Activated CD4-positive, alpha-beta T cell treated with anti-CD3 and anti-CD28 coated beads, Interleukin-2, amount 10 ng/mL, durations not matched to agents 24 days and 14 days (primary cell): ENCODE measurements at regions of chr2 and their contacts with region 1.

Region 1: DNA sequence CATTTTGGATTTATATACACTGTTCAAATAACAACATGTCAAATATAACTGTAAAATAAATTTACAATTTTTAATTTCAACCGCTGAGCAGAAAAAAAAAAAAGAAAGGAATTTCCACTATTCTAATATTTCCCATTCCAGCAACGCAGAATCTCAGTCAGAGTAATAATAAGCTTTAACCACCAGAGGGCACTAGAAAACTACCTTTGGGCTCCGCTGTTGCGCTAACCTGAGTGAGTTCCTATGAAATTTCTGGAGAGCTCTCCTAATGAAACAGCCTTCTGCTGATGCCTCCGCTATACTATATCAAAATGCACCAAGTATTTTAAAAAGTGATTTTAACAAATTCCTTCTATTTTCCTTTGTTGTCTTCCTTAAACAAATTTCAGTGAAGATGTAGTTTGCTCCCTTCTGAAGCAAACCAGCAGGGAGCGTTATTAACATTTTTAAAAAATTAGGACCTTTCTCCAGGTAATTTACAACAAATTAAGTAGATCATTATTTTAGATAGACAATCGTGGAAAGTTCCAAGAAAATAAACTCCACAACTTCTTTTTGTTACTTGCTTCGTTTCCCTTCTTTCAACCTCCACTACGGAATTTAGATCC is 23.0 kb downstream of the ERMN start:
- DNase-seq: peak; percentile 82
- H3K4me3 Mint-ChIP-seq: no peak overlapping the region
- H3K27ac Mint-ChIP-seq: no peak overlapping the region
- H3K4me1 Mint-ChIP-seq: peaks cover 13% of the 10 kb centered on the region
- H3K27me3 Mint-ChIP-seq: peaks cover 19% of the 10 kb centered on the region

Region 2: GRCh38 chr2:157194097-157194688 is 108.4 kb before region 1 on chr2:
- intact Hi-C with region 1: no loop called
- DNase-seq: peak; percentile 66
- H3K4me3 Mint-ChIP-seq: no peak overlapping the region
- H3K27ac Mint-ChIP-seq: no peak overlapping the region
- H3K4me1 Mint-ChIP-seq: peaks cover 9% of the 10 kb centered on the region
- H3K27me3 Mint-ChIP-seq: peaks cover 22% of the 10 kb centered on the region

Region 3: GRCh38 chr2:157492189-157492773 is 189.7 kb after region 1 on chr2:
- intact Hi-C with region 1: loop called (anchors 2 kb)
- DNase-seq: peak; percentile 91
- H3K4me3 Mint-ChIP-seq: no peak overlapping the region
- H3K27ac Mint-ChIP-seq: no peak overlapping the region
- H3K4me1 Mint-ChIP-seq: peaks cover 56% of the 10 kb centered on the region
- H3K27me3 Mint-ChIP-seq: no peaks in the 10 kb centered on the region

Region 4: DNA sequence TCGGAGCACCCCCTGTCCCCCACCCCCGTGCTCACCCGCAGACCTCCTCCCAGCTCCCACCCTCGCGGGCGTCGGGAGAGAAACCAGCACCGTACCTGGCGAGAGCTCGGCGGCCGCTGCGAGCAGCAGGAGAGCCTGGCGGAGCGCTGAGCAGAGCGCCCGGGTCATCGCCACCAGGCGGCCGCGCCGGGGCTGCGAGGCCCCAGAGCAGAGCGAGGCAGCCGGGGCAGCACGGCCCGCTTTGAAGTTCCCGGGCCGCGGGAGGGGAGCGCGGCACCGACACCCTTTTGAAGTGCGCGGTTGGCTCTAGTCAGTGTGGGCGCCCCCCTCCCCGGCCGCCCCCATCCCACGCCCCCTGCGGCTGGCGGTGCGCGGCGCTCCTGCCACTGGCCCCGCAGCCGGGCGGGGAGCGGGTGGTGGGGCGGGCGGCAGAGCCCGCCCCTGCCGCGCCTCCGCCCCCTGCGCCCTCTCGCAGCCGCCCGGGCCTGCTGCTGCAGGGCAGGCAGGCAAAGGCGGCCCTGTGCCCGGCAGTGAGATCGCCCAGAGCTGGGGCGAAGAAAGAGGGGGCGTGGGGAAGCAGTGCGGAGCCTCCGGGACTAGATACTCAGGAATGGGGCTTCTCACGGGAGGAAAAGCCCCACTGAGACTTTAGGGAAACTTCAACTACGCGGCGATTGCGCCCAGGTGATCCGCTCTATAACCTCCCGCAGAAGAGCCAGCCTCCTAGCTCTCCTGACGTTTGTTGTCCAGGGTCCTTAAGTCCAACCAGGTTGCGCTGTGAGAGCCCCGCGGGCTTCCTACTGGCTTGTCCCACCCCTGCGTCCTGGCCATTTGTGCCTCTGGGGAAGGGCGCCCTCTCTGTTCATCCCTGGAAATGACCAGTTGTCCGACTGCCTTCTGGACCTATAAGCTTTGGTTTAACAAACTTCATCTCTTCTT is 326.1 kb after region 1 on chr2 and contains the start of gene ACVR1C:
- intact Hi-C with region 1: loop called (anchors 10 kb)
- DNase-seq: peak; percentile 90
- H3K4me3 Mint-ChIP-seq: peak within 1 kb of the TSS; percentile 91
- H3K27ac Mint-ChIP-seq: peak within 1 kb of the TSS; percentile 66
- H3K4me1 Mint-ChIP-seq: peaks cover 24% of the 10 kb centered on the region
- H3K27me3 Mint-ChIP-seq: peaks cover 27% of the 10 kb centered on the region
- total RNA-seq, gene ACVR1C: 0.98 and 1.0 TPM in 2 replicates

Region 5: GRCh38 chr2:157777427-157777826 is 474.8 kb after region 1 on chr2:
- intact Hi-C with region 1: loop called (anchors 1 kb)
- DNase-seq: peak; percentile 85
- H3K4me3 Mint-ChIP-seq: no peak overlapping the region
- H3K27ac Mint-ChIP-seq: no peak overlapping the region
- H3K4me1 Mint-ChIP-seq: peaks cover 29% of the 10 kb centered on the region
- H3K27me3 Mint-ChIP-seq: no peaks in the 10 kb centered on the region

Region 6: GRCh38 chr2:158753641-158754611 is 1451.3 kb after region 1 on chr2:
- intact Hi-C with region 1: loop called (anchors 10 kb)
- DNase-seq: peak; percentile 77
- H3K4me3 Mint-ChIP-seq: no peak overlapping the region
- H3K27ac Mint-ChIP-seq: no peak overlapping the region
- H3K4me1 Mint-ChIP-seq: no peaks in the 10 kb centered on the region
- H3K27me3 Mint-ChIP-seq: peaks cover 8% of the 10 kb centered on the region